ENCODE measurements at regions of chr20 and their contacts with region 1.

Region 1: GRCh38 chr20:330233-331149 is 5.1 kb downstream of the SOX12 start:
- DNase-seq: peak in 1 of 2 donors; percentile 59
- ATAC-seq: peak in 4 of 8 donors; percentile 12 to 27 (median 22)
- H3K4me3 ChIP-seq: no peak overlapping the region
- H3K27ac ChIP-seq: peak overlapping the region in 2 of 10 donors; percentile 13 to 14
- H3K4me1 ChIP-seq: peaks cover 3 to 43% (median 21%) of the 10 kb centered on the region in 9 donors
- H3K27me3 ChIP-seq: peaks cover 0 to 9% (median 0%) of the 10 kb centered on the region in 7 donors
- CTCF ChIP-seq: peak; percentile 66 to 90 (median 86)

Region 2: DNA sequence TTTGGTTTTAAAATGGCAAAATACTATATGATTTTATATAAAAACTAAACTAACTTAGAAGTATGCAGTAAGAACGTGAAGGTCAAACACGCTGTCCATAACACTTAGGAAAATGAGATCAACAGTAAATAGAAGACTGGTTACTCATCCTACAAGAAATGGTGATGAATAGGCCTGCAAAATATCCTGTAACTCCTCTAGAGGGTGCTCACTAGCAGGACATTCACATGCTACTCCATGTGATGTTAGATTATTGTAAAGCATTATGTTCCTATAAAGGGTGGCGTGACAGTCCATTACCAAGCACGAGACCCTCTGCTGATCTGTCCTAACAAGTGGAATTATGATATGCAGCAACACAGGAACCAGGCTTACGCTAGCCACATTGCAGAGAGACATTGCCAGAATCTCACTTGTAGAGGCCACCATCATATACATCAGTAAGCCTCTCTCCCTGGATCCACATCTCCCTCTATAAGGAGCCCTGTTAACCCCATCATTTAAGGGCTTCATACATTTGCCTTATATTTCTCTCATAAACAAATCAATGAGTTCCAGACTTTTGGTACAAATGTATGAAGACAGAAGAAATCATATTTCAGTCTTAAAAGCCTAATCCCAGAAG is 121.4 kb before region 1 on chr20:
- intact Hi-C with region 1: loop called in 2 of 10 experiments (anchors 5 to 10 kb)
- DNase-seq: peak in 1 of 2 donors; percentile 9
- ATAC-seq: peak in 7 of 8 donors; percentile 29 to 84 (median 72)
- H3K4me3 ChIP-seq: no peak overlapping the region
- H3K27ac ChIP-seq: no peak overlapping the region
- H3K4me1 ChIP-seq: peaks cover 0 to 4% (median 0%) of the 10 kb centered on the region in 9 donors
- H3K27me3 ChIP-seq: peaks cover 0 to 8% (median 0%) of the 10 kb centered on the region in 7 donors
- CTCF ChIP-seq: peak in 8 of 9 donors; percentile 23 to 64 (median 57)

Region 3: GRCh38 chr20:219290-220115 is 111.0 kb before region 1 on chr20:
- intact Hi-C with region 1: loop called in 1 of 10 experiments (anchors 10 kb)
- DNase-seq: no peak
- ATAC-seq: peak in 6 of 8 donors; percentile 55 to 74 (median 64)
- H3K4me3 ChIP-seq: no peak overlapping the region
- H3K27ac ChIP-seq: no peak overlapping the region
- H3K4me1 ChIP-seq: peaks cover 0 to 12% (median 0%) of the 10 kb centered on the region in 9 donors
- H3K27me3 ChIP-seq: peaks cover 0 to 29% (median 4%) of the 10 kb centered on the region in 7 donors
- CTCF ChIP-seq: peak in 8 of 9 donors; percentile 11 to 54 (median 43)

Region 4: GRCh38 chr20:235891-236290 is 94.6 kb before region 1 on chr20:
- intact Hi-C with region 1: no loop called
- DNase-seq: no peak
- ATAC-seq: peak in 4 of 8 donors; percentile 48 to 66 (median 62)
- H3K4me3 ChIP-seq: no peak overlapping the region
- H3K27ac ChIP-seq: no peak overlapping the region
- H3K4me1 ChIP-seq: peaks cover 0 to 7% (median 0%) of the 10 kb centered on the region in 9 donors
- H3K27me3 ChIP-seq: peaks cover 0 to 7% (median 4%) of the 10 kb centered on the region in 7 donors
- CTCF ChIP-seq: peak in 5 of 9 donors; percentile 22 to 57 (median 40)

Region 5: GRCh38 chr20:266596-267562 is 63.6 kb before region 1 on chr20:
- intact Hi-C with region 1: loop called in 4 of 10 experiments (anchors 5 to 10 kb)
- DNase-seq: peak; percentile 85 to 87
- ATAC-seq: peak; percentile 87 to 94 (median 94)
- H3K4me3 ChIP-seq: peak overlapping the region; percentile 15 to 62 (median 57)
- H3K27ac ChIP-seq: no peak overlapping the region
- H3K4me1 ChIP-seq: peaks cover 0 to 13% (median 0%) of the 10 kb centered on the region in 9 donors
- H3K27me3 ChIP-seq: peaks cover 0 to 3% (median 0%) of the 10 kb centered on the region in 7 donors
- CTCF ChIP-seq: peak; percentile 95 to 99 (median 97)

Region 6: GRCh38 chr20:278607-279571 is 51.6 kb before region 1 on chr20:
- intact Hi-C with region 1: loop called in 4 of 10 experiments (anchors 5 to 10 kb)
- DNase-seq: peak; percentile 33 to 47
- ATAC-seq: peak; percentile 21 to 64 (median 50)
- H3K4me3 ChIP-seq: peak overlapping the region in 8 of 10 donors; percentile 16 to 45 (median 34)
- H3K27ac ChIP-seq: peak overlapping the region in 3 of 10 donors; percentile 31 to 40 (median 39)
- H3K4me1 ChIP-seq: no peaks in the 10 kb centered on the region
- H3K27me3 ChIP-seq: no peaks in the 10 kb centered on the region
- CTCF ChIP-seq: peak in 4 of 9 donors; percentile 14 to 34 (median 26)

Region 7: GRCh38 chr20:347640-348484 is 17.4 kb after region 1 on chr20:
- intact Hi-C with region 1: loop called in 1 of 10 experiments (anchors 2 kb)
- DNase-seq: peak; percentile 91 to 92
- ATAC-seq: peak; percentile 88 to 93 (median 91)
- H3K4me3 ChIP-seq: peak overlapping the region; percentile 43 to 83 (median 72)
- H3K27ac ChIP-seq: peak overlapping the region; percentile 84 to 97 (median 93)
- H3K4me1 ChIP-seq: peaks cover 0 to 26% (median 14%) of the 10 kb centered on the region in 9 donors
- H3K27me3 ChIP-seq: no peaks in the 10 kb centered on the region
- CTCF ChIP-seq: no peak

Region 8: DNA sequence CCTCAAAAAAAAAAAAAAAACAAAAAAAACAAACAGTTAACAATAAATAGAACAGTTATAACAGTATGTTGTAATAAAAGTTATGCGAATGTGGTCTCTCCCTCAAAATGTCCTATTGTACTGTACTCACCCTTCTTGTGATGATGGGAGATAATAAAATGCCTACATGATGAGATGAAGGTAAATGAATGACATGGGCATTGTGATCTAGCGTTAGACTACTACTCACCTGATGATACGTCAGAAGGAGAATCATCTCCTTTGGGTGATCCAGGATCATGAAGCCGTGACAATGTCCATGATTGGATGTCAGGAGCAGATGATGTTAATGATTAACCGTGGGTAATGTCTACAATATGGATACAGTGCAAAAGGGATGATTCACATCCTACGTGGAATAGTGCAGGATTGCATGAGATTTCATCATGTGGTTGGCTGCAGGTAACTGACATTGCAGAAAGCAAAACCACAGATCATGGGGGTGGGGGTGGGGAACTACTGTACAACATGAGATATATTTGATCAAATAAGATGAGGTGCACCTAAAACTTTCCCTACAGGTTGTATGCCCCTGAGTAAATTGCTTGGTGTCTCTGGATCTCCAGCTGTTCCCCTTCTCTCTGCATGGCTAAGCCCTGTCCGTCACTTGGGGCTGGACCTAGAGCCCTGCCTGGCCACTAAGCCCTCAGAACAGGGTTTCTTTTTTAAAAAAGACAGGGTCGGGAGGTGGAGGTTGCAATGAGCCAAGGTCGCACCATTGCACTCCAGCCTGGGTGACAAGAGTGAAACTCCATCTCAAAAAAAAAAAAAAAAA is 71.4 kb after region 1 on chr20:
- intact Hi-C with region 1: no loop called
- DNase-seq: no peak
- ATAC-seq: no peak
- H3K4me3 ChIP-seq: no peak overlapping the region
- H3K27ac ChIP-seq: no peak overlapping the region
- H3K4me1 ChIP-seq: peaks cover 0 to 2% (median 0%) of the 10 kb centered on the region in 9 donors
- H3K27me3 ChIP-seq: no peaks in the 10 kb centered on the region
- CTCF ChIP-seq: no peak